Panc1 (cell line): ENCODE measurements at regions of chr1 and their contacts with region 1.

Region 1: GRCh38 chr1:50929376-50929958 is 30.6 kb downstream of the FAF1 start:
- DNase-seq: peak; percentile 10
- ATAC-seq: no peak
- H3K4me3 ChIP-seq: no peak overlapping the region
- H3K27ac ChIP-seq: no peak overlapping the region
- H3K4me1 ChIP-seq: no peaks in the 10 kb centered on the region
- H3K27me3 ChIP-seq: no peaks in the 10 kb centered on the region
- CTCF ChIP-seq: peak; percentile 54; the same call in 1 of the 2 replicates

Region 2: GRCh38 chr1:50796272-50796671 is 133.2 kb before region 1 on chr1:
- CTCF ChIA-PET with region 1: no interaction called
- POLR2A ChIA-PET with region 1: no interaction called
- in situ Hi-C with region 1: no loop called
- intact Hi-C with region 1: no loop called
- DNase-seq: no peak
- ATAC-seq: no peak
- H3K4me3 ChIP-seq: no peak overlapping the region
- H3K27ac ChIP-seq: no peak overlapping the region
- H3K4me1 ChIP-seq: no peaks in the 10 kb centered on the region
- H3K27me3 ChIP-seq: no peaks in the 10 kb centered on the region
- CTCF ChIP-seq: no peak

Region 3: GRCh38 chr1:50913954-50914353 is 15.5 kb before region 1 on chr1:
- CTCF ChIA-PET with region 1: interaction called, 10 read pairs
- POLR2A ChIA-PET with region 1: no interaction called
- in situ Hi-C with region 1: no loop called
- intact Hi-C with region 1: no loop called
- DNase-seq: no peak
- ATAC-seq: no peak
- H3K4me3 ChIP-seq: no peak overlapping the region
- H3K27ac ChIP-seq: no peak overlapping the region
- H3K4me1 ChIP-seq: no peaks in the 10 kb centered on the region
- H3K27me3 ChIP-seq: no peaks in the 10 kb centered on the region
- CTCF ChIP-seq: no peak

Region 4: DNA sequence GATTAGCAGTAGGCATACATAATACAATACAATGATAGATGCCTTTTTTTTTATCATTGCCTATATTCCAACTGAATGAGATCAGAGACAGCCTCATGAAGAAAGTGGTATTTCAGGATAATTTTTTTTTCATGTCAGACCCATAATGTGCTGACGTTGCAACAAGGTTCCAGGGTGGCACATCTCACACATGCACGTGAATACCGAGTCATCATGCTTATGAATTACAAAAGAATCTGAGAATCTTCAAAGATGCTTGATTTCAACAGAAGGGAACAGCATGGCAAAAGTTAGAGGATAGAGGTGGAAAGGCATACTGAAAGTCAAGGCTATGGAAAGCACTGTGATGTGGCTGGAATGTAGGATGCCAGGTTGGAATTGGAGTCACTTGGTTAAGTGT is 301.7 kb after region 1 on chr1:
- CTCF ChIA-PET with region 1: no interaction called
- POLR2A ChIA-PET with region 1: no interaction called
- in situ Hi-C with region 1: no loop called
- intact Hi-C with region 1: no loop called
- DNase-seq: no peak
- ATAC-seq: no peak
- H3K4me3 ChIP-seq: no peak overlapping the region
- H3K27ac ChIP-seq: no peak overlapping the region
- H3K4me1 ChIP-seq: peaks cover 12% of the 10 kb centered on the region
- H3K27me3 ChIP-seq: no peaks in the 10 kb centered on the region
- CTCF ChIP-seq: no peak